ENCODE measurements at regions of chr13 and their contacts with region 1.

Region 1: DNA sequence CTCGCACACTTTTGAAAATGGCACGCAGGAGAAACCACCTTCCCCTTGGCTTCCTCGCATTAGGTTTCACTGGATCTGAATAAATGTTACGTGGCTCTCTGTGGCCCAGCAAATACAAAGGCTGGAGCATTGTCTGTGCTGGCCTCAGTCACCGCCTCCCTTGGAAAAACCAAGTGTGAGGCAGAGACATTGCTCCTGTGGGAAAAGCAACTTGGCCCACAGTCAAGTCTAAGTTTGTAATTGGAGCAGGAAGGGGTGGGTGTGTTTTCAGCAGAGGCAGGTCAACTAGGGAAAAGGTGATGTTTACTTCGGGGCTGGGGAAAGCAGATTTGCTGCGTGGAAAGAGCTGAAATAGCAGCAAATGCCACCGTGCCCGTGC is 101.6 kb downstream of the IRS2 start:
- DNase-seq: no peak
- H3K4me3 ChIP-seq: no peak overlapping the region
- H3K4me3 Mint-ChIP-seq: no peak overlapping the region
- H3K27ac Mint-ChIP-seq: no peak overlapping the region
- H3K4me1 ChIP-seq: no peaks in the 10 kb centered on the region
- H3K4me1 Mint-ChIP-seq: peaks cover 6% of the 10 kb centered on the region
- H3K27me3 ChIP-seq: no peaks in the 10 kb centered on the region
- H3K27me3 Mint-ChIP-seq: peaks cover 7% of the 10 kb centered on the region
- CTCF ChIP-seq: no peak

Region 2: DNA sequence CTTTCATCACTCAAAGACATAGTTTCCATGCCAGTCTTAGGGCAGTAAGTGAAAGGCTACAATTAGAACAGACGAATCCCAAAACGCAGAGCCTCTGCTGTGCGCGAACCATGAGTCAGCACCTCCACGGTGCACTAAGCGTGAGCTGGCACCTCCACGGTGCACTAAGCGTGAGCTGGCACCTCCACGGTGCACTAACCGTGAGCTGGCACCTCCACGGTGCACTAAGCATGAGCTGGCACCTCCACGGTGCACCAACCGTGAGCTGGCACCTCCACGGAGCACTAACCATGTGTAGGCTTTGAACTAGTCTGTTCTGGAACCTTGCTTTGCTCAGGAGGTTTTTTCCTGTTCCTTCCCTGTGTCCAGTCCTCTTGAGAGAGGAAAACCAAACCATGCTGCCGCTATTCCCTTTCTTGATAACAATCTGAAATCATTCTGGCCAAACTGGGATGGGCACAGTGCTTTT is 19.0 kb before region 1 on chr13:
- CTCF ChIA-PET with region 1: no interaction called
- POLR2A ChIA-PET with region 1: no interaction called
- intact Hi-C with region 1: no loop called
- DNase-seq: no peak
- H3K4me3 ChIP-seq: no peak overlapping the region
- H3K4me3 Mint-ChIP-seq: no peak overlapping the region
- H3K27ac Mint-ChIP-seq: no peak overlapping the region
- H3K4me1 ChIP-seq: no peaks in the 10 kb centered on the region
- H3K4me1 Mint-ChIP-seq: no peaks in the 10 kb centered on the region
- H3K27me3 ChIP-seq: no peaks in the 10 kb centered on the region
- H3K27me3 Mint-ChIP-seq: peaks cover 4% of the 10 kb centered on the region
- CTCF ChIP-seq: no peak

Region 3: DNA sequence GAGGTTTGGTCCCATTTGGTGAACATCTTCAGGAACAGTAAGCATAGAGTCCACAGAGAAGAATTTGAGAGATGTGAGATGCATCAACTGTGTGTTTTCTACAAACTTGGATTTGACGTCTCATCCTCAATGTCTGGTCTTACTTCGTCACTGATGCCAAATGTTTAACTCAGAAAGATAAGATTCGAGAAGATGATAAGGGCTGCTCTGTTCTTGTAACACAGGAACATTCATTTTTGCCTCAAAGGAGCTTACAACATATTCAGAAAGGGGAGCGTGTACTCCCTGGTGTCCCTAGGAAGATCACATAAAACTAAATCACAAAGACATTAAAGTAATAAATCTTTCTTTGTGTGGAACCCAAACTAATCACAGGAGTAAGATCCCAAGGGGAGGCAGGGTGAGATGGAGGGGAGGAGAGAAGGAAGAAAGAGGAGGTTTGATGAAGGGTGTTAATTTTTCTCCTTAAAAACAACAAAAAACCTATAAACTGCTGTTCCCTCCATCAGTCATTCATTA is 349.3 kb after region 1 on chr13:
- CTCF ChIA-PET with region 1: interaction called, 12 read pairs
- POLR2A ChIA-PET with region 1: no interaction called
- intact Hi-C with region 1: no loop called
- DNase-seq: no peak
- H3K4me3 ChIP-seq: no peak overlapping the region
- H3K4me3 Mint-ChIP-seq: no peak overlapping the region
- H3K27ac Mint-ChIP-seq: no peak overlapping the region
- H3K4me1 ChIP-seq: peaks cover 3% of the 10 kb centered on the region; the same call in 1 of the 2 replicates
- H3K4me1 Mint-ChIP-seq: peaks cover 7% of the 10 kb centered on the region
- H3K27me3 ChIP-seq: no peaks in the 10 kb centered on the region
- H3K27me3 Mint-ChIP-seq: peaks cover 3% of the 10 kb centered on the region
- CTCF ChIP-seq: no peak